WTC11 (cell line): ENCODE measurements at regions of chr10 and their contacts with region 1.

Region 1: GRCh38 chr10:70255329-70256299 is 22.4 kb upstream of the PPA1 start:
- DNase-seq: no peak
- ATAC-seq: no peak; the same call in 1 of the 2 replicates
- H3K4me3 Mint-ChIP-seq: no peak overlapping the region
- H3K27ac Mint-ChIP-seq: no peak overlapping the region
- H3K4me1 Mint-ChIP-seq: 0 out of 2 replicates have a peak, but pooled peaks cover 5% of the 10 kb centered on the region
- H3K27me3 Mint-ChIP-seq: peaks cover 6% of the 10 kb centered on the region; the same call in 1 of the 2 replicates
- CTCF ChIP-seq: no peak

Region 2: GRCh38 chr10:70233109-70233938 is 22.3 kb before region 1 on chr10 and contains the start of gene PPA1:
- CTCF ChIA-PET with region 1: interaction called, 12 read pairs
- POLR2A ChIA-PET with region 1: interaction called, 3 read pairs
- DNase-seq: peak; percentile 99
- ATAC-seq: peak; percentile 95
- H3K4me3 Mint-ChIP-seq: peak within 1 kb of the TSS; percentile 92
- H3K27ac Mint-ChIP-seq: peak within 1 kb of the TSS; percentile 73
- H3K4me1 Mint-ChIP-seq: peaks cover 8% of the 10 kb centered on the region
- H3K27me3 Mint-ChIP-seq: no peaks in the 10 kb centered on the region; the same call in 1 of the 2 replicates
- CTCF ChIP-seq: no peak
- total RNA-seq, gene PPA1: 140 to 180 TPM (median 144 TPM) in 3 replicates